H1 (cell line): ENCODE measurements at regions of chr6 and their contacts with region 1.

Region 1: GRCh38 chr6:29696155-29697125 is 15.5 kb upstream of the ZFP57 start:
- DNase-seq: peak in 1 of 2 experiments; percentile 66
- H3K4me3 ChIP-seq: no peak overlapping the region
- H3K27ac ChIP-seq: no peak overlapping the region
- H3K4me1 ChIP-seq: peaks cover 0 to 3% (median 2%) of the 10 kb centered on the region in 4 experiments; a peak in 5 of 7 replicates
- H3K27me3 ChIP-seq: no peaks in the 10 kb centered on the region
- CTCF ChIP-seq: peak; percentile 66 to 80 (median 80)
- EP300 ChIP-seq: no peak
- POLR2A ChIP-seq: no peak
- RAD21 ChIP-seq: peak; percentile 45 to 69

Region 2: DNA sequence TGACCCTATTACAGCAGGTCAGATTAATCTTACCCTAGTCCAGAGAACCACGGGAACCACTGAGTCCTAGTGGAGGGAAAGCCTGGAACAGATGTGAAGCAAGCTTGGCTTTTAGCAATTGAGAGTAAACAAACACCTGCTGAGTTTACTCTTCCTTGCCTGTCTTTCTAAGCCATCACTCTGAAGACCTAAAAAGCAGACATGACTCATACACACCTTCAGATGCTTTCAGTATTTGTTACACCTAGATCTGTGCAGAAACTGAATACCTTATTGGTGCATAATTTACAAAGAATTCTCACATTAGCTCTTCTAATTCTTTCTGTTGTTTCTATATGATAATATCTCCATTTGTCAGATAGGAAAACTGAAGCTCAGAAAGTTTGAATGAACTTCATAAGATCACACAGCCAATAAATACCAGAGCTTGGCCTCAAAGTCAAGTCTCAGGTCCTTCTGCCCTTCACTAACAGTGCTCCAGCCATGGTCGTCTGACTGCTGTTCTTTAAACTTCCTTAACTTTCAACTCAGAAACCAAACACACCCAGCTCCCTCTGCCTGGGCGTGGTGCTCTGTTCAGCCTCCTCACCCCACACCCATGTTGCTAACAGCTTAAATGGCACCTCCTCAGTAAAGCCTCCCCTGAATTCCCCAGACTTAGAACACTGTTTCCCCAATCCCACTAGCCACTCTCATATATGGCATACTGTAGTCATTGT is 54.9 kb before region 1 on chr6:
- CTCF ChIA-PET with region 1: interaction called, 523 read pairs
- POLR2A ChIA-PET with region 1: interaction called, 4 read pairs
- DNase-seq: no peak
- H3K4me3 ChIP-seq: no peak overlapping the region
- H3K27ac ChIP-seq: no peak overlapping the region
- H3K4me1 ChIP-seq: no peaks in the 10 kb centered on the region; a peak in 2 of 7 replicates
- H3K27me3 ChIP-seq: no peaks in the 10 kb centered on the region
- CTCF ChIP-seq: no peak
- EP300 ChIP-seq: no peak
- POLR2A ChIP-seq: no peak
- RAD21 ChIP-seq: no peak

Region 3: GRCh38 chr6:29676981-29677601 is 19.3 kb before region 1 on chr6:
- CTCF ChIA-PET with region 1: interaction called, 77 read pairs
- POLR2A ChIA-PET with region 1: interaction called, 3 read pairs
- DNase-seq: no peak
- H3K4me3 ChIP-seq: no peak overlapping the region
- H3K27ac ChIP-seq: 0 out of 2 replicates have a peak overlapping the region, but pooled peaks have one; percentile 19
- H3K4me1 ChIP-seq: peaks cover 0 to 3% (median 0%) of the 10 kb centered on the region in 4 experiments; a peak in 1 of 7 replicates
- H3K27me3 ChIP-seq: no peaks in the 10 kb centered on the region
- CTCF ChIP-seq: no peak
- EP300 ChIP-seq: no peak
- POLR2A ChIP-seq: no peak
- RAD21 ChIP-seq: no peak

Region 4: DNA sequence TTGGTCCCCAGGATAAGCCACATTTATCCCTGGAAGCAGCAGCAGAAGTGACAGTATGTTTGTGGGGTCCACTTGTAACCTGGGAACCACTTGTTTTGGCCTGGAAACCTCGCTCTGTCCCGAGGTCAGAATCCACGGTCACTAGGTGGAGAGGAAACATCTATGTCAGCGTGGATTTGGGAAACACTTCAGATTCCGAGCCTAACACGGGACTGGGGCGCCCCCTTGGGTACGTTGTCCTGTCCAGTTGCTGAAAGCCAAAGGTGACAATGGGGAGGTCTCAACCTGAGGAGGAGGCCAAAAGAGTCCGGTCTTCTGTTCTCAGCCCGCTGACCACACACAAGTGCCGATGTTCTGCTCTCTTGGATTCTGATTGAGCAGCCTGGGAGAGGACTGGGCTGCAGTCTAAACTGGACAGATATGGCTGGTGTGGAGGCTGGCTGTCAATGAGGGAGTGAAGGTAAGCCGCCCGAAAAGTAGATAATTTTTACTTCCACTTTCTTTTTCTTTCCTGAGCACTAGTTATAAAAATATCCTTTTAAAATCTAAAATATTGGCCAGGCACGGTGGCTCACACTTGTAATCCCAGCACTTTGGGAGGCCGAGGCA is 10.6 kb before region 1 on chr6:
- CTCF ChIA-PET with region 1: interaction called, 37 read pairs
- POLR2A ChIA-PET with region 1: no interaction called
- DNase-seq: peak in 1 of 2 experiments; percentile 88
- H3K4me3 ChIP-seq: no peak overlapping the region
- H3K27ac ChIP-seq: no peak overlapping the region
- H3K4me1 ChIP-seq: peaks cover 0 to 8% (median 0%) of the 10 kb centered on the region in 4 experiments; a peak in 4 of 7 replicates
- H3K27me3 ChIP-seq: no peaks in the 10 kb centered on the region
- CTCF ChIP-seq: peak; percentile 80 to 89 (median 85)
- EP300 ChIP-seq: no peak
- POLR2A ChIP-seq: no peak
- RAD21 ChIP-seq: peak; percentile 93 to 97

Region 5: GRCh38 chr6:29995340-29995777 is 298.9 kb after region 1 on chr6:
- CTCF ChIA-PET with region 1: no interaction called
- POLR2A ChIA-PET with region 1: no interaction called
- DNase-seq: no peak
- H3K4me3 ChIP-seq: no peak overlapping the region
- H3K27ac ChIP-seq: no peak overlapping the region
- H3K4me1 ChIP-seq: no peaks in the 10 kb centered on the region; a peak in 1 of 7 replicates
- H3K27me3 ChIP-seq: peaks cover 0 to 2% (median 0%) of the 10 kb centered on the region in 4 experiments; a peak in 1 of 7 replicates
- CTCF ChIP-seq: no peak
- EP300 ChIP-seq: no peak
- POLR2A ChIP-seq: no peak
- RAD21 ChIP-seq: no peak

Region 6: DNA sequence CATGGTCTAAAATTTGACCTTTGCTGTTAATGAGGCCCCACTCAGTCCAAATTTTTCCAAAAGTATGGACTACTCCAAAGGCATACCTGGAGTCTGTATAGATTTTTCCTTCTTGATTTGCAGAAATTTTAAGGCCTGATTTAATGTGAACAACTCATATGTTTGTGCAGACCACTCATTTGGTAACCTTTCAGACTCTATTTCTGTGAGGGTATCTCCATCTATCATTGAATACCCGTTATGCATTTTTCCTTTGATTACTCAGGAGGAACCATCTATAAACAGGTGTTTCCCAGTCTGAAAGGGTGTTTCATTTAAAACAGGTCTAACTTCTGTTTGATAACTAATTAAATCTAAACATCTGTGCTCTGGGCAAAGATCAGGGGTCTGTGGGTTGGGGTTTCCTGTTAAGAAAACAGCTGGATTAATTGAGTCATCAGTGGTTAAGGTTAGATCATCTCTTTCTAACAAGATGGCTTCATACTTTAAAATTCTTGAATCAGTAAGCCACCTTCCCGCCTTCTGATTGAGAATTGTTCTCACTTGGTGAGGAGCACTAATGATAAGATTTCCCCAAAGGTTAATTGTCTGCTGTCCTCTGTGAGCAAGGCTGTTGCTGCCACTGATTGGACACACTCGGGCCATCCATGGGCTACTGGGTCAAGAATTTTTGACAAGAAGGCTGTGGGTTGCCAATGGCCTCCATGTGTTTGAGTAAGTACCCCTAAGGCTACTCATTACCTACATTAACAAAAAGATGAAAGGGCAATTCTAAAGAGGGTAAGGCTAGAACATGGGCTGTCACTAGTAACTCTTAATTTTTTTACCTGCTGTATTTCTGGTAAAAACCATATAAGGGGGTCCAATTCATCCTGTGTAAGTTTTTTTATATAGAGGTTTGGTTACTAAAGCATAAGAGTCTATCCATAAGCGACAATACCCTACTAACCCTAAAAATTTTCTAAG is 1636.5 kb after region 1 on chr6:
- CTCF ChIA-PET with region 1: no interaction called
- POLR2A ChIA-PET with region 1: no interaction called
- DNase-seq: no peak
- H3K4me3 ChIP-seq: no peak overlapping the region
- H3K27ac ChIP-seq: no peak overlapping the region
- H3K4me1 ChIP-seq: no peaks in the 10 kb centered on the region
- H3K27me3 ChIP-seq: no peaks in the 10 kb centered on the region
- CTCF ChIP-seq: no peak
- EP300 ChIP-seq: no peak
- POLR2A ChIP-seq: no peak
- RAD21 ChIP-seq: no peak